CD14-positive monocyte (primary cell): ENCODE measurements at regions of chr2 and their contacts with region 1.

Region 1: GRCh38 chr2:37832590-37833197 is 92.4 kb upstream of the RMDN2 start:
- DNase-seq: peak; percentile 75 to 80 (median 79)
- H3K4me3 ChIP-seq: peak overlapping the region in 1 of 3 experiments; percentile 37
- H3K4me3 Mint-ChIP-seq: peak overlapping the region in 1 of 2 donors; percentile 75
- H3K27ac ChIP-seq: peak overlapping the region in 1 of 2 donors; percentile 97
- H3K27ac Mint-ChIP-seq: peak overlapping the region in 6 of 7 donors; percentile 18 to 90 (median 76)
- H3K4me1 ChIP-seq: peaks cover 50 to 51% of the 10 kb centered on the region in 2 donors
- H3K4me1 Mint-ChIP-seq: peaks cover 56% of the 10 kb centered on the region
- H3K27me3 ChIP-seq: no peaks in the 10 kb centered on the region
- H3K27me3 Mint-ChIP-seq: peaks cover 0 to 3% (median 0%) of the 10 kb centered on the region in 3 donors
- CTCF ChIP-seq: peak; percentile 88

Region 2: DNA sequence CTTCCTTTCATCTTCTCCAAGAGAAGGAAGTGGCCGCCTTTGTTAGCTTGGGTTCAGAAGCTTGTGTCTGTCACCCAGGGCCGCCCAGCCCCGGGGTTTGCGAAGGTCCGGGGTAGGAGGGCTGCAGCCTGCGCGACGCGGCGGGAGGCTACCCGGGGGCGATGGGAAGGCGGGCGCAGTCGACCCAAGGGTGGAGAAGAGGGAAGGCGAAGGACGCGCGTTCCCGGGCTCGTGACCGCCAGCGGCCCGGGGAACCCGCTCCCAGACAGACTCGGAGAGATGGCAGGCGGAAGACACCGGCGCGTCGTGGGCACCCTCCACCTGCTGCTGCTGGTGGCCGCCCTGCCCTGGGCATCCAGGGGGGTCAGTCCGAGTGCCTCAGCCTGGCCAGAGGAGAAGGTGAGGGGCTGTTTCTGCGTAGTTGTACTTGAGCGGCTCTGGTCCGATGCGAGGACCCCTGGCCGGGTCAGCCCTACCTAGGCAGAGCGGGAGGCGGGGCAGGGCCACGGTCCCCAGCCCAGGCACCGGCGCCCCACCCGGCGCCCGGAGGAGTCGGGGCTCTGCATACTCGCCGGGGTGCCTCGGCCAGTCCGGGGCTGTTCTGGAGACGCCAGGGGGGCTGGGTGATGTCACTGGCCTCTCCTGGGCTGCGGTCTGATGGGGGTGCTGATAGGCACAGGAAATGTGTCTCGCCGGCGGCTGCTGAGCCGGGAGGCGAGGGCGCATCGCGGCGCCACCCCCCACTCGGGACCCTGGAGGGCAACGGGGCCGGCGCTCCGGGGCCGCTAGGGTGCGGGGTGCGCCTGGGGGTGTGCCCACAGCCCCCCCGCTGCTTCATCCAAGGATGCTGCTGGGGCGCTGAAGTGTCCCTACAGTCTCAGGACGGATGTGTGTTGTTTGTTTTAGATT is 488.0 kb before region 1 on chr2 and contains the start of gene QPCT:
- intact Hi-C with region 1: loop called in 1 of 2 experiments (anchors 5 kb)
- DNase-seq: peak; percentile 61 to 73 (median 71)
- H3K4me3 ChIP-seq: peak within 1 kb of the TSS; percentile 43 to 88 (median 61)
- H3K4me3 Mint-ChIP-seq: peak within 1 kb of the TSS; percentile 91 to 94
- H3K27ac ChIP-seq: peak within 1 kb of the TSS; percentile 82 to 84
- H3K27ac Mint-ChIP-seq: peak within 1 kb of the TSS; percentile 96 to 100 (median 98)
- H3K4me1 ChIP-seq: peaks cover 52 to 65% of the 10 kb centered on the region in 2 donors
- H3K4me1 Mint-ChIP-seq: peaks cover 57% of the 10 kb centered on the region
- H3K27me3 ChIP-seq: no peaks in the 10 kb centered on the region
- H3K27me3 Mint-ChIP-seq: peaks cover 2 to 3% (median 3%) of the 10 kb centered on the region in 3 donors
- CTCF ChIP-seq: no peak
- polyA plus RNA-seq, gene QPCT: 54.7 to 302 (median 272) TPM

Region 3: GRCh38 chr2:37397166-37397565 is 435.5 kb before region 1 on chr2:
- intact Hi-C with region 1: loop called in 1 of 2 experiments (anchors 2 kb)
- DNase-seq: no peak
- H3K4me3 ChIP-seq: no peak overlapping the region
- H3K4me3 Mint-ChIP-seq: no peak overlapping the region
- H3K27ac ChIP-seq: no peak overlapping the region
- H3K27ac Mint-ChIP-seq: no peak overlapping the region
- H3K4me1 ChIP-seq: peaks cover 20 to 25% of the 10 kb centered on the region in 2 donors
- H3K4me1 Mint-ChIP-seq: peaks cover 27% of the 10 kb centered on the region
- H3K27me3 ChIP-seq: no peaks in the 10 kb centered on the region
- H3K27me3 Mint-ChIP-seq: peaks cover 0 to 3% (median 0%) of the 10 kb centered on the region in 3 donors
- CTCF ChIP-seq: no peak

Region 4: GRCh38 chr2:37529830-37530415 is 302.8 kb before region 1 on chr2:
- intact Hi-C with region 1: loop called in 1 of 2 experiments (anchors 10 kb)
- DNase-seq: no peak
- H3K4me3 ChIP-seq: no peak overlapping the region
- H3K4me3 Mint-ChIP-seq: no peak overlapping the region
- H3K27ac ChIP-seq: no peak overlapping the region
- H3K27ac Mint-ChIP-seq: no peak overlapping the region
- H3K4me1 ChIP-seq: peaks cover 20 to 23% of the 10 kb centered on the region in 2 donors
- H3K4me1 Mint-ChIP-seq: peaks cover 28% of the 10 kb centered on the region
- H3K27me3 ChIP-seq: no peaks in the 10 kb centered on the region
- H3K27me3 Mint-ChIP-seq: peaks cover 0 to 3% (median 0%) of the 10 kb centered on the region in 3 donors
- CTCF ChIP-seq: no peak

Region 5: DNA sequence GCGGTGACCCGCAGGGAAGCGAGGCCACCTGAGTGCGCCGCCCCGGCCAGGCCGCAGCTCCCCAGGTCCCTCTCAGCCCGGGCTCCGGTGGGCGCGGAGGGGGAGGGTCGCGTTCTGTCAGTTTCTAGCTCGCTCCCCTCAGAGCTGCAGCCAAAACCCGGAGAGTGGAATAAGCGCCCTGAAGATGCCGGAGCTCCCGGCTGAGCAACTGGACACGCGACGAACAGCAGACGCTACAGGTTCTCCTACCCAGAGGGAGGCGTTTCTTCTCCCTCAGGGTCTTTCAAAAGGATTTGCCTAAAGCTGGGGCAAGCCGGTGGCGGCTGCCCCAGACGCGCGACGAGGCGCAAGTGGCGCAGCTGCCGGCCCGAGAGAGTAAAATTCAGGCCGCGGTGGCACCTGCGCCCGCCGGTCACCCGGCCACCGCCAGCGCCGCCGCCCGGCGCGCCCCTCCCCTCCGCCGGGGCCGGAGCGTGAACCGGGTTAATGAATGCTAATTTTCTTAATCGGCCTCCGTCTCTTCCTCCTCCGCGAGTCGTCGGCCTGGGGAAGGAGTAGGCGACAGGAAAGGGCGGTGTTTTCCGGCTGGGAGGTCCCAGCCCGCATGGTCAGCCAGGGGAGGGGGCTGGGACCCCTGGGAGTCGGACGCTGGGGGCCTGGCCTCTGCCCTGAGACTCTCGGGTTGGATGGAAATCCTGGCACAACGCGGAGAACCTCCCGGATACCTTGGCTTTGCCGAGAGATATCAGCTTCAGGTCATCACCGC is 160.4 kb before region 1 on chr2:
- intact Hi-C with region 1: loop called (anchors 2 to 5 kb)
- DNase-seq: peak; percentile 67 to 76 (median 74)
- H3K4me3 ChIP-seq: peak overlapping the region; percentile 95 to 98 (median 97)
- H3K4me3 Mint-ChIP-seq: peak overlapping the region; percentile 82 to 86
- H3K27ac ChIP-seq: peak overlapping the region; percentile 95 to 97
- H3K27ac Mint-ChIP-seq: peak overlapping the region; percentile 91 to 98 (median 95)
- H3K4me1 ChIP-seq: peaks cover 49 to 59% of the 10 kb centered on the region in 2 donors
- H3K4me1 Mint-ChIP-seq: peaks cover 57% of the 10 kb centered on the region
- H3K27me3 ChIP-seq: no peaks in the 10 kb centered on the region
- H3K27me3 Mint-ChIP-seq: peaks cover 0 to 2% (median 0%) of the 10 kb centered on the region in 3 donors
- CTCF ChIP-seq: no peak

Region 6: GRCh38 chr2:37877457-37878315 is 45.0 kb after region 1 on chr2:
- intact Hi-C with region 1: loop called in 1 of 2 experiments (anchors 5 kb)
- DNase-seq: peak; percentile 55 to 73 (median 66)
- H3K4me3 ChIP-seq: no peak overlapping the region
- H3K4me3 Mint-ChIP-seq: no peak overlapping the region
- H3K27ac ChIP-seq: no peak overlapping the region
- H3K27ac Mint-ChIP-seq: no peak overlapping the region
- H3K4me1 ChIP-seq: no peaks in the 10 kb centered on the region
- H3K4me1 Mint-ChIP-seq: peaks cover 11% of the 10 kb centered on the region
- H3K27me3 ChIP-seq: peaks cover 0 to 9% of the 10 kb centered on the region in 2 donors
- H3K27me3 Mint-ChIP-seq: peaks cover 12 to 14% (median 12%) of the 10 kb centered on the region in 3 donors
- CTCF ChIP-seq: peak; percentile 85